ENCODE measurements at regions of chr3 and their contacts with region 1.

Region 1: GRCh38 chr3:172476347-172476746 is 28.1 kb upstream of the GHSR start:
- DNase-seq: peak; percentile 23
- H3K4me3 Mint-ChIP-seq: peak overlapping the region; percentile 79
- H3K27ac Mint-ChIP-seq: peak overlapping the region; percentile 82
- H3K4me1 Mint-ChIP-seq: peaks cover 26% of the 10 kb centered on the region
- H3K27me3 Mint-ChIP-seq: no peaks in the 10 kb centered on the region
- CTCF ChIP-seq: no peak

Region 2: DNA sequence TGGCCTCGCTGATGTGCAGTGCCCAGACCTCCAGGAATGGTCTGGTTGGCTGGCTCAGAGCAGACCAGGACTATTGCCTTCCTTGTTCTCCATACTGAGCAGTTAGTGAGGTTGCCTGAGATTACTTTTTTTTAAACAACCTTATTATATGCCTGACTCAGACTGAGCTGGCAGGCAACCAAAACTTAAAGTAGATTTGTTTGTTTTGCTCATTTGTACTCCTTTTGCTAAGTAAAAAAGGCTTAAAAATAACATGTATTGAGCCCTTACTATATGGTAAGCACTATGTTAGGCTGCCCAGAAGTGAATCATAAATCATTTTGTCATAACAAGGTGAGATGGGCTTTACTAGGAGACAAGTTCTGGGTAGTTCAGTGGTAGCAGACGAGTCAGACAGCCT is 120.5 kb before region 1 on chr3:
- CTCF ChIA-PET with region 1: no interaction called
- intact Hi-C with region 1: loop called (anchors 5 kb)
- DNase-seq: no peak
- H3K4me3 Mint-ChIP-seq: no peak overlapping the region
- H3K27ac Mint-ChIP-seq: peak overlapping the region; percentile 64
- H3K4me1 Mint-ChIP-seq: peaks cover 27% of the 10 kb centered on the region
- H3K27me3 Mint-ChIP-seq: no peaks in the 10 kb centered on the region
- CTCF ChIP-seq: no peak

Region 3: GRCh38 chr3:172397716-172398405 is 78.5 kb before region 1 on chr3:
- CTCF ChIA-PET with region 1: no interaction called
- intact Hi-C with region 1: loop called (anchors 5 kb)
- DNase-seq: no peak
- H3K4me3 Mint-ChIP-seq: no peak overlapping the region
- H3K27ac Mint-ChIP-seq: no peak overlapping the region
- H3K4me1 Mint-ChIP-seq: no peaks in the 10 kb centered on the region
- H3K27me3 Mint-ChIP-seq: no peaks in the 10 kb centered on the region
- CTCF ChIP-seq: no peak

Region 4: DNA sequence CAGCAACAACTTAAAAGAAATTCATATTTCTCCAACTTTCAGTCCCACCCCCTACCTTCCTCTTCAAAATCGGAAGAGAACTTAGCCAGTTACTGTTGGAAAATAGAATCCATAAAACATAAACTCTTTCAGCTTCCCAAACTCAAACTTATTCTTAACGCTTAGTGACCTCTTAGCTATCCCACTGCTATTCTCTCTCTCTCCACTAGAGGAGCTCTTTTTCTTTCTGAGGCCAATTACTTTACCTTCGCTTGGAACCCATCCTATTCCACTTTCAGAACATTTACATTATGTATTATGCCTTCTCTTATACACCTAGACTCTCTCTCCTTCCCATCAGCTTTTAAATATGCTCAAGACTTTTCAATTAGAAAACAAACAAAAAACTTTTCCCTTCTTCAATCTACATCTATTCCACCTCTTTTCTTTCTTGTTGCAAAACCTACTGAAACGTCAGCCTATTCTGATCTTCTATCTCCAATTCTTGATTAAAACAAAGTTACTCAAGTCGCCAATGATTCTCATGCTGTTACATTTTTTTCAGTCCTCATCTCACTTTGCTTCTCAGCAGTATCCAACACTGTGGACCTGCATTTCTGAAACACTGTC is 14.7 kb before region 1 on chr3:
- CTCF ChIA-PET with region 1: interaction called, 20 read pairs
- intact Hi-C with region 1: no loop called
- DNase-seq: no peak
- H3K4me3 Mint-ChIP-seq: no peak overlapping the region
- H3K27ac Mint-ChIP-seq: no peak overlapping the region
- H3K4me1 Mint-ChIP-seq: peaks cover 20% of the 10 kb centered on the region
- H3K27me3 Mint-ChIP-seq: no peaks in the 10 kb centered on the region
- CTCF ChIP-seq: peak; percentile 97